AG04450 (cell line): ENCODE measurements at regions of chr5 and their contacts with region 1.

Region 1: DNA sequence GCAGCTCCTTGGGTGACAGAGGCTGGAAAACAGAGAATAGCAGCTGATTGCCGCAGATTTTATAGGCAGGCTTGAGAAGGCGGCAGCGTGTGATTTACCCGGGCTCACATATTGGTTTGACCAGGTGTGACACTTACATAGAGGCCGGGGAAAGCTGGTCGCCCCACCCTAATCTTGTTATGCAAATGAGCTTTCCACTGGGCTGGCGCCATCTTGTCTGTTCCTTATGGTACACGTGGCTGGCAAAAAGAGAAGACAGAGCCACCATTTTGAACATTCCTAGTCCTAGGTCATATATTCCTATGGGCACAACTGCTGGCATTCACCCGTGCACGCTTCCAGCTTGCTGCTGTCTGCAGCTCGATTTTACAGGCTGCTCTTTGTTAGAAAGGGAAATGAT is 11.3 kb upstream of the SPZ1 start:
- DNase-seq: no peak
- H3K4me3 ChIP-seq: no peak overlapping the region
- H3K27ac ChIP-seq: no peak overlapping the region
- H3K27me3 ChIP-seq: no peaks in the 10 kb centered on the region
- CTCF ChIP-seq: no peak

Region 2: GRCh38 chr5:79878721-79879336 is 429.7 kb before region 1 on chr5:
- CTCF ChIA-PET with region 1: no interaction called
- POLR2A ChIA-PET with region 1: no interaction called
- DNase-seq: no peak
- H3K4me3 ChIP-seq: no peak overlapping the region
- H3K27ac ChIP-seq: no peak overlapping the region
- H3K27me3 ChIP-seq: peaks cover 2% of the 10 kb centered on the region
- CTCF ChIP-seq: peak; percentile 46

Region 3: GRCh38 chr5:80324912-80325311 is 16.4 kb after region 1 on chr5:
- CTCF ChIA-PET with region 1: interaction called, 10 read pairs
- POLR2A ChIA-PET with region 1: no interaction called
- DNase-seq: no peak
- H3K4me3 ChIP-seq: no peak overlapping the region
- H3K27ac ChIP-seq: no peak overlapping the region
- H3K27me3 ChIP-seq: peaks cover 2% of the 10 kb centered on the region
- CTCF ChIP-seq: no peak